ENCODE measurements at regions of chr17 and their contacts with region 1.

Region 1: DNA sequence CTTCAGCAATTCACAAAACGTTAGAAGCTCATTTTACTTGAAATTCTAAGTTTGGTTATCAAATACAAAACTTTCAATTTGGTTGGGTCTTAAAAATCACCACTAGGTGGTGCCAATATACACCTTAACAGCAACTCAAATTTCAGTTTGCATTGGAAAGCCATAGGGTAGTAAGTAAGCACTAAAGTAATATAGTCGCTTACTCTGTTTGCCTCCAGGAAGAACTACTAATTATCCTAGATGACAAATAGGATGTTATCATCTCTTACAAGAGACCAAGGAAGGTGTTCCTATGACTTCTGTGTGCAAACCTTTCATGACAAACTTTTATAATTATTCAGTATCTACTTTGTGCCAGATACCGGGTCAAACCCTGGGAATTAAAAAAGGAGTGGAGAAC is 93.3 kb downstream of the MYO1D start:
- DNase-seq: peak; percentile 12 to 52 (median 45)
- H3K4me3 ChIP-seq: no peak overlapping the region
- H3K4me3 Mint-ChIP-seq: no peak overlapping the region
- H3K27ac ChIP-seq: no peak overlapping the region
- H3K27ac Mint-ChIP-seq: no peak overlapping the region
- H3K4me1 ChIP-seq: no peaks in the 10 kb centered on the region
- H3K4me1 Mint-ChIP-seq: peaks cover 3% of the 10 kb centered on the region
- H3K27me3 ChIP-seq: no peaks in the 10 kb centered on the region
- H3K27me3 Mint-ChIP-seq: peaks cover 1 to 8% (median 2%) of the 10 kb centered on the region in 3 donors
- CTCF ChIP-seq: peak; percentile 84

Region 2: GRCh38 chr17:32569171-32570080 is 214.2 kb before region 1 on chr17:
- intact Hi-C with region 1: no loop called
- DNase-seq: no peak
- H3K4me3 ChIP-seq: no peak overlapping the region
- H3K4me3 Mint-ChIP-seq: no peak overlapping the region
- H3K27ac ChIP-seq: no peak overlapping the region
- H3K27ac Mint-ChIP-seq: no peak overlapping the region
- H3K4me1 ChIP-seq: no peaks in the 10 kb centered on the region
- H3K4me1 Mint-ChIP-seq: no peaks in the 10 kb centered on the region
- H3K27me3 ChIP-seq: no peaks in the 10 kb centered on the region
- H3K27me3 Mint-ChIP-seq: peaks cover 2 to 5% (median 5%) of the 10 kb centered on the region in 3 donors
- CTCF ChIP-seq: no peak

Region 3: DNA sequence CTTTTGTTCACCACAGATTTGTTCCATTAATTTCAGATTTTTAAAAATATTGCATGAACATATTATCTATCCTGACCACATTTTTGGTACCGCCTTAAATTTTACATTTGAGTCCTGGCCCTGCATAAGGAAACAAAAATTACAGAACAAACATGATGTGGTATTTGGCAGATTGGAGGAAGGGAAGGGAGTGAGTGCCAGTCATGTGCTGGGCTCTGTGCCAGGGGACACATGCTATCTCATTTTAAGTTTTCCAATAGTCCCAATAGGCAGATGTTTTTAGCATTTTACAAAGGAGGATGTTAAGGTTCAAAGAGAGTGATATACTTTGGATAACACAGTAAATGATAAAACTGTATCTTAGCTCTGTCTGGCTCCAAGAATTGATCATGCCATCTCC is 111.7 kb before region 1 on chr17:
- intact Hi-C with region 1: no loop called
- DNase-seq: no peak
- H3K4me3 ChIP-seq: no peak overlapping the region
- H3K4me3 Mint-ChIP-seq: no peak overlapping the region
- H3K27ac ChIP-seq: no peak overlapping the region
- H3K27ac Mint-ChIP-seq: peak overlapping the region in 1 of 7 donors; percentile 5
- H3K4me1 ChIP-seq: no peaks in the 10 kb centered on the region
- H3K4me1 Mint-ChIP-seq: peaks cover 10% of the 10 kb centered on the region
- H3K27me3 ChIP-seq: no peaks in the 10 kb centered on the region
- H3K27me3 Mint-ChIP-seq: peaks cover 0 to 1% (median 0%) of the 10 kb centered on the region in 3 donors
- CTCF ChIP-seq: no peak

Region 4: GRCh38 chr17:32877164-32877764 is 93.7 kb after region 1 on chr17:
- intact Hi-C with region 1: loop called in 1 of 2 experiments (anchors 5 kb)
- DNase-seq: peak; percentile 66 to 79 (median 73)
- H3K4me3 ChIP-seq: peak overlapping the region; percentile 23 to 60 (median 49)
- H3K4me3 Mint-ChIP-seq: peak overlapping the region; percentile 76 to 87
- H3K27ac ChIP-seq: no peak overlapping the region
- H3K27ac Mint-ChIP-seq: peak overlapping the region in 3 of 7 donors; percentile 13 to 73 (median 56)
- H3K4me1 ChIP-seq: peaks cover 16 to 24% of the 10 kb centered on the region in 2 donors
- H3K4me1 Mint-ChIP-seq: peaks cover 22% of the 10 kb centered on the region
- H3K27me3 ChIP-seq: peaks cover 51 to 62% of the 10 kb centered on the region in 2 donors
- H3K27me3 Mint-ChIP-seq: peaks cover 44 to 61% (median 46%) of the 10 kb centered on the region in 3 donors
- CTCF ChIP-seq: peak; percentile 80

Region 5: DNA sequence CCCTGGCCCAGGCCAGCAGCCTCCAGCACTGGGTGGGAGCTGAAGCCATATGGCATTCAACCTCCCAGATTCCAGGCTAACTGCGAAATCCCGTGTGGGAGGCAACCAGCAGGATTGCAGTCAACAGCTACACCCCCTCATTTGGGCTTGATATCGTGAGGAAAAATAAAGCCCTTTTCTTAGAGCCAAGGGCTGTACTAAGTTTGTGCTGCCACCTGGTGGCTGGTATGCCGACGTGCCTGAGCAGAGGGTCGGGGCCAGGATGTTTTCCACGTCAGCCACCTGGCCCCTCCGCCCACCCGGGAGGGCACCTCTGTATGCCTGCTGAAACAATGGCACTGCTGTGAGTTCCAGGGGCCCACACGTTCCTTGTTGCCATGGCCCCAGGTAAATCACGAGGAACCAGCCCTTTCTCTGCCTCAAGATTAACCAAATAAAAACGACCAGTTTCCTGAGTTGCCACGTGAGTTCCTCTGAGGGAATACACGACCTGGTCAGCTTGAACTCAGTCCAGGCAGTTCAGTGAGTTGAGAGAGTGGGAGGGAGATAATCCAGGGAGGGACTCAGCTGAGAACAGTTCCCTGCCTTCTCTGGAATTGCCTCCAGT is 153.4 kb after region 1 on chr17:
- intact Hi-C with region 1: loop called (anchors 1 to 10 kb)
- DNase-seq: peak; percentile 6 to 30 (median 19)
- H3K4me3 ChIP-seq: no peak overlapping the region
- H3K4me3 Mint-ChIP-seq: no peak overlapping the region
- H3K27ac ChIP-seq: no peak overlapping the region
- H3K27ac Mint-ChIP-seq: peak overlapping the region in 1 of 7 donors; percentile 54
- H3K4me1 ChIP-seq: no peaks in the 10 kb centered on the region
- H3K4me1 Mint-ChIP-seq: peaks cover 3% of the 10 kb centered on the region
- H3K27me3 ChIP-seq: no peaks in the 10 kb centered on the region
- H3K27me3 Mint-ChIP-seq: peaks cover 0 to 9% (median 6%) of the 10 kb centered on the region in 3 donors
- CTCF ChIP-seq: peak; percentile 88